Activated CD4-positive, alpha-beta memory T cell treated with anti-CD3 and anti-CD28 coated beads, Interleukin-2, amount 10 ng/mL, durations not matched to agents 7 days and 5 days (primary cell): ENCODE measurements at regions of chr22 and their contacts with region 1.

Region 1: GRCh38 chr22:31661851-31662656 is at the start of gene PISD:
- DNase-seq: peak; percentile 98
- H3K4me3 Mint-ChIP-seq: peak within 1 kb of the TSS; percentile 91
- H3K27ac Mint-ChIP-seq: peak within 1 kb of the TSS; percentile 91
- H3K4me1 Mint-ChIP-seq: peaks cover 37% of the 10 kb centered on the region
- H3K27me3 Mint-ChIP-seq: no peaks in the 10 kb centered on the region
- total RNA-seq, gene PISD: 19.2 to 19.6 TPM

Region 2: GRCh38 chr22:31345331-31346254 is 316.5 kb before region 1 on chr22:
- CTCF ChIA-PET with region 1: no interaction called
- POLR2A ChIA-PET with region 1: interaction called, 12 read pairs
- DNase-seq: peak; percentile 88
- H3K4me3 Mint-ChIP-seq: peak overlapping the region; percentile 81
- H3K27ac Mint-ChIP-seq: peak overlapping the region; percentile 74
- H3K4me1 Mint-ChIP-seq: peaks cover 49% of the 10 kb centered on the region
- H3K27me3 Mint-ChIP-seq: no peaks in the 10 kb centered on the region

Region 3: GRCh38 chr22:31630331-31631329 is 31.4 kb before region 1 on chr22:
- CTCF ChIA-PET with region 1: interaction called, 13 read pairs
- POLR2A ChIA-PET with region 1: interaction called, 29 read pairs
- DNase-seq: peak; percentile 89
- H3K4me3 Mint-ChIP-seq: peak overlapping the region; percentile 78
- H3K27ac Mint-ChIP-seq: peak overlapping the region; percentile 83
- H3K4me1 Mint-ChIP-seq: peaks cover 43% of the 10 kb centered on the region
- H3K27me3 Mint-ChIP-seq: no peaks in the 10 kb centered on the region

Region 4: DNA sequence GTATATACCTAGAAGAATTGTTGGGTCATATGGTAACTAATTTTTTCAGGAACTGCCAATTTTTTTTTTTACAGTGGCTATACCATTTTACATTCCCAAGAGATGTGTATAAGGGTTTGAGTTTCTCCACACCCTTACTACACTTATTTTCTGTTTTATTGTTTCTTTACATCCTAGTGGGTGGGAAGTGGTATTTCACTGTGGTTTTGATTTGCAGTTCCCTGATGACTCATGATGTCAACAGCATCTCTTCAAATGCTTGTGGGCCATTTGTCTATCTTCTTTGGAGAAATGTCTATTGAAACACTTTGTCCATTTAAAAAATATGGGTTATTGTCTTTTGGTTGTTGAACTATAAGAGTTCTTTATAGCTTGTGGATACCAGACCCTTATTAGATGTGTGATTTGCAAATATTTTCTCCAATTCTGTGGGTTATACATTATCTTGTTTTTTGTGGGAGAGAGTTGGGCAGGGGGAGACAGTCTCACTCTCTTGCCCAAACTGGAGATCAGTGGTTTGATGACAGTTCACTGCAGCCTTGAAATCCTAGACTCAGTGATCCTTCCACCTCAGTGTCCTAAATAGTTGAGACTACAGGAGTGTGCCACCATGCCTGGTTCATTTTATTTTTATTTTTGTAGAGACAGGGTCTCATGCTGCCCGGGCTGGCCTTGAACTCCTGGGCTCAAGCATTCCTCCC is 30.3 kb after region 1 on chr22:
- CTCF ChIA-PET with region 1: interaction called, 32 read pairs
- POLR2A ChIA-PET with region 1: interaction called, 4 read pairs
- DNase-seq: no peak
- H3K4me3 Mint-ChIP-seq: no peak overlapping the region
- H3K27ac Mint-ChIP-seq: peak overlapping the region; percentile 93
- H3K4me1 Mint-ChIP-seq: peaks cover 44% of the 10 kb centered on the region
- H3K27me3 Mint-ChIP-seq: no peaks in the 10 kb centered on the region

Region 5: GRCh38 chr22:31943976-31944699 is 282.1 kb after region 1 on chr22 and contains the start of gene YWHAH:
- CTCF ChIA-PET with region 1: interaction called, 49 read pairs
- POLR2A ChIA-PET with region 1: interaction called, 17 read pairs
- DNase-seq: peak; percentile 93
- H3K4me3 Mint-ChIP-seq: no peak within 1 kb of the TSS
- H3K27ac Mint-ChIP-seq: peak within 1 kb of the TSS; percentile 91
- H3K4me1 Mint-ChIP-seq: peaks cover 31% of the 10 kb centered on the region
- H3K27me3 Mint-ChIP-seq: no peaks in the 10 kb centered on the region
- total RNA-seq, gene YWHAH: 203 to 211 TPM

Region 6: GRCh38 chr22:31970490-31971444 is 308.7 kb after region 1 on chr22:
- CTCF ChIA-PET with region 1: interaction called, 87 read pairs
- POLR2A ChIA-PET with region 1: interaction called, 6 read pairs
- DNase-seq: peak; percentile 92
- H3K4me3 Mint-ChIP-seq: peak overlapping the region; percentile 63
- H3K27ac Mint-ChIP-seq: no peak overlapping the region
- H3K4me1 Mint-ChIP-seq: peaks cover 18% of the 10 kb centered on the region
- H3K27me3 Mint-ChIP-seq: peaks cover 9% of the 10 kb centered on the region